Pancreas (tissue), 10 donors: ENCODE measurements at regions of chr7 and their contacts with region 1.

Region 1: GRCh38 chr7:15015545-15016326 is 113.2 kb upstream of the DGKB start:
- DNase-seq: peak in 4 of 6 donors; percentile 26 to 62 (median 52)
- ATAC-seq: peak; percentile 92 to 99 (median 96)
- H3K4me3 ChIP-seq: peak overlapping the region in 2 of 4 donors; percentile 14 to 31
- H3K27ac ChIP-seq: peak overlapping the region in 2 of 4 donors; percentile 48 to 57
- H3K4me1 ChIP-seq: peaks cover 0 to 4% (median 3%) of the 10 kb centered on the region in 3 donors
- H3K27me3 ChIP-seq: no peaks in the 10 kb centered on the region
- CTCF ChIP-seq: peak; percentile 35 to 69 (median 58)

Region 2: GRCh38 chr7:14720785-14721184 is 295.0 kb before region 1 on chr7:
- intact Hi-C with region 1: loop called in 1 of 3 experiments (anchors 10 kb)
- DNase-seq: no peak
- ATAC-seq: no peak
- H3K4me3 ChIP-seq: no peak overlapping the region
- H3K27ac ChIP-seq: no peak overlapping the region
- H3K4me1 ChIP-seq: no peaks in the 10 kb centered on the region
- H3K27me3 ChIP-seq: no peaks in the 10 kb centered on the region
- CTCF ChIP-seq: no peak

Region 3: DNA sequence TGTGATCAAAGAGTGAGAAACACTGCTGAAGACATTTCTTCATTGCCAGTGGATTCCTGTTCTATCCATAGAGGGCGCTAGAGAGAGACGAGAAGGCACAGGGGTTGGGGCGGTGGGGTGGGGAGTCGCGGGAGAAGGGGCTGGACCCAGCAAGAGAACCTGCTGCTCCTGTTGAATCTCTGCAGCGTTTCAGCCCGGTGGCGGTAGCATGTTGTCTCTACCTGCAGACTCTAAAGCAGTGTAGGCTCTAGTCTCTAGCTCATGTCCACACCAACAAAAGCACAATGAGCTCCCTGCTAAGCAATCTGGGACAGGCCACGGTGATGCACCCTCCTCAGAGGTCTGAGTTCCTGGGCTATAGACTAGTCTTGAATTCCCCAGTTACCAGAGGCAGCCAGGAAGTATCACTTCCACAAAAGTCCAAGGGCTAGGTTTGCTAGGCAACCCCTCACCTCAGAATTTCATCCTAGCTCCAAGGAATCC is 280.9 kb before region 1 on chr7:
- intact Hi-C with region 1: loop called in 1 of 3 experiments (anchors 10 kb)
- DNase-seq: peak in 4 of 6 donors; percentile 3 to 34 (median 12)
- ATAC-seq: peak; percentile 38 to 88 (median 66)
- H3K4me3 ChIP-seq: no peak overlapping the region
- H3K27ac ChIP-seq: no peak overlapping the region
- H3K4me1 ChIP-seq: no peaks in the 10 kb centered on the region
- H3K27me3 ChIP-seq: no peaks in the 10 kb centered on the region
- CTCF ChIP-seq: peak in 1 of 4 donors; percentile 26